PC-3 (cell line): ENCODE measurements at regions of chr12 and their contacts with region 1.

Region 1: GRCh38 chr12:88186003-88186402 is 43.9 kb downstream of the TMTC3 start:
- DNase-seq: peak; percentile 89
- ATAC-seq: peak; percentile 87
- H3K4me3 ChIP-seq: no peak overlapping the region
- H3K27ac ChIP-seq: peak overlapping the region; percentile 88
- H3K4me1 ChIP-seq: peaks cover 57% of the 10 kb centered on the region
- H3K27me3 ChIP-seq: no peaks in the 10 kb centered on the region
- CTCF ChIP-seq: no peak

Region 2: GRCh38 chr12:88172844-88173407 is 13.1 kb before region 1 on chr12:
- CTCF ChIA-PET with region 1: no interaction called
- POLR2A ChIA-PET with region 1: no interaction called
- intact Hi-C with region 1: loop called (anchors 1 kb)
- DNase-seq: peak; percentile 93
- ATAC-seq: peak; percentile 97
- H3K4me3 ChIP-seq: no peak overlapping the region
- H3K27ac ChIP-seq: peak overlapping the region; percentile 84
- H3K4me1 ChIP-seq: peaks cover 19% of the 10 kb centered on the region
- H3K27me3 ChIP-seq: no peaks in the 10 kb centered on the region
- CTCF ChIP-seq: no peak

Region 3: DNA sequence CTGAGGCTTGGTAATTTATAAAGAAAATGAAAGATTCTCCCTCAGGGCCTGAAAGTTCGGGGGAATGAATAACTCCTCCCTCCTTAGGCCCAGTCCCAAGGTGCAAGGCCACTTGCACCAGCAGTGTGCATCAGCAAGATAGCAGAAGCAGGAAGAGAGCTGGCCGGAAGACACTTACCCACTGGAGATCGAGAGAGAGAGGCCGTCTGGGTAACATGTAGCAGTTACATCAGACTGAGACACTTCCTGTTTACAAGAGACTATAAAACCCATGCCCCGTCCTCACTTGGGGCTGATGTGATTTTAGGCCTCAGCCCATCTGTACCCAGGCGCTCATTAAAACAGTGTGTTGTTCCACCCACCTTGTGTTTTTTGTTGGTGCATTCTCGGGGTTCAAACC is 41.3 kb after region 1 on chr12:
- CTCF ChIA-PET with region 1: no interaction called
- POLR2A ChIA-PET with region 1: no interaction called
- intact Hi-C with region 1: no loop called
- DNase-seq: no peak
- ATAC-seq: no peak
- H3K4me3 ChIP-seq: no peak overlapping the region
- H3K27ac ChIP-seq: no peak overlapping the region
- H3K4me1 ChIP-seq: no peaks in the 10 kb centered on the region
- H3K27me3 ChIP-seq: no peaks in the 10 kb centered on the region
- CTCF ChIP-seq: no peak

Region 4: DNA sequence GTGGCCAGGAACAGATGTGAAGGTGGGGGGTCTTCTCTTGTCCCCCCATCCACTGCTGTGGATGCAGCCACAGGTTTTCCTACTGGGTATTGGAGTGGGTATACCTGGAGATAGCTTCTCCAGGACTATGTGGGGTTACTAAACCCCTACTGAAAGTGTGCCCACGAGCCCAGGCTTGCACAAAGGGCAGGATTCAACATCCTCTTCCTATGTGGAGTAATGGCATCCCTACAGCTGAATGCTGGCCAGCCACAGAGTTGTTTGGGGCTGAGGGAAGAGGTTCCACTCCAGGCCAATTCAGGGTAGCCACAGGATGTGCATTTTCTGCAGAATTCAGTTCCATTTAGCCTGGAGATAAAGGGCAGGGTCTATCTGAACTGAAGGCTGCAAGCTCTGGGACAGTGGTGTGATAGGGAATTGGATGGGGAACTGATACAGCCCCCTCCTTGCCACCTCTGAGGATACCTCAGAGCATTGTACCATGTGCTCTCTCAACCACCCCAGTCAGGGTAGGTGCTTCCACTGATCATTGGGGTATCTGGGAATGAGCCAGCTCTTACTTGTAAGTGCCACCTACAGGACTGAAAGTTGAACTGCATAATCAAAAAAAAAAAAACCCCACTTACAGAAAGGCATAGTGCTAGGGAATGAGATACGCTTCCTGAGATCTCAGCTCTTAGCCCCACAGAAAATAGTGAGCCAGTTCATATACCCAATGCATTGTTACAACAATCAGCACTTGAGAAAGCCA is 207.2 kb after region 1 on chr12:
- CTCF ChIA-PET with region 1: no interaction called
- POLR2A ChIA-PET with region 1: no interaction called
- intact Hi-C with region 1: loop called (anchors 10 kb)
- DNase-seq: peak; percentile 55
- ATAC-seq: peak; percentile 29; the same call in 1 of the 2 replicates
- H3K4me3 ChIP-seq: no peak overlapping the region
- H3K27ac ChIP-seq: no peak overlapping the region
- H3K4me1 ChIP-seq: 0 out of 2 replicates have a peak, but pooled peaks cover 4% of the 10 kb centered on the region
- H3K27me3 ChIP-seq: no peaks in the 10 kb centered on the region
- CTCF ChIP-seq: peak; percentile 75